Dorsolateral prefrontal cortex (tissue), 120 donors: ENCODE measurements at regions of chr10 and their contacts with region 1.

Region 1: GRCh38 chr10:64636461-64636860 is 1115.3 kb downstream of the REEP3 start:
- DNase-seq: peak in 2 of 10 donors; percentile 24 to 36
- H3K4me3 ChIP-seq: peak overlapping the region in 2 of 59 donors; percentile 19 to 22
- H3K27ac ChIP-seq: peak overlapping the region; percentile 52 to 99 (median 93)
- H3K27me3 ChIP-seq: no peaks in the 10 kb centered on the region
- CTCF ChIP-seq: peak in 10 of 56 donors; percentile 5 to 27 (median 13)

Region 2: GRCh38 chr10:64396105-64396755 is 240.2 kb before region 1 on chr10:
- intact Hi-C with region 1: no loop called
- DNase-seq: no peak
- H3K4me3 ChIP-seq: no peak overlapping the region
- H3K27ac ChIP-seq: no peak overlapping the region
- H3K27me3 ChIP-seq: no peaks in the 10 kb centered on the region
- CTCF ChIP-seq: no peak

Region 3: GRCh38 chr10:64537928-64538327 is 98.5 kb before region 1 on chr10:
- intact Hi-C with region 1: loop called in 1 of 2 experiments (anchors 2 kb)
- DNase-seq: peak in 3 of 10 donors; percentile 41 to 48 (median 45)
- H3K4me3 ChIP-seq: peak overlapping the region in 5 of 59 donors; percentile 1 to 29 (median 4)
- H3K27ac ChIP-seq: peak overlapping the region in 57 of 59 donors; percentile 28 to 95 (median 86)
- H3K27me3 ChIP-seq: no peaks in the 10 kb centered on the region
- CTCF ChIP-seq: peak in 4 of 56 donors; percentile 6 to 34 (median 18)